ENCODE measurements at regions of chr1 and their contacts with region 1.

Region 1: DNA sequence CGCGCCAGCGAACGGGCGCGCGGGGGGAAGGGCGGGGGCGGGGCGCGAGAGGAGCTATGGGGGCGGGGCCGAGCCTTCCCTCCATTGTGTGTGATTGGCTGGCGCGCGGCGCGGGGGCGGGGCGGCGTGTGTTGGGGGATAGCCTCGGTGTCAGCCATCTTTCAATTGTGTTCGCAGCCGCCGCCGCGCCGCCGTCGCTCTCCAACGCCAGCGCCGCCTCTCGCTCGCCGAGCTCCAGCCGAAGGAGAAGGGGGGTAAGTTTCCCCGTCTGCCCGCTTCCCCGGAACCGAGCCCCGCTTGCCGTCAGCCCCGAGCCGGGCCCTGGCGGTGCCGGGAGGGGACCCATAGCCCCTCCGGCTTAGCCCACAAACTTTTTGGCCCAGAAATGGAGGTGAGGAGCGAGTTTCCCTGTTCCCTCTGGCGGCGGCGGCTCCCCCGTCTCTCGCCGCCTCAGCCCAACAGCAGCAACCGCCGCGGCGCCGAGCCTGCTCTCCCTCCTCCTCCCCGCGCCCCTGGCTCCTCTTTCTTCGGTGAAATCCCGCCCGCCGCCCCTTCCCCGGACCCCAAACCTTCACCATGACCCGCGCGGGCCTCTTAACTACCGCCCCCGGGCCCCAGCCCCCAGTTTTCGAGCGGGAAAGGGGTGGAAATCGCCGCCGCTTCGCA is at the start of gene H3-3A:
- DNase-seq: peak; percentile 97
- H3K4me3 Mint-ChIP-seq: peak within 1 kb of the TSS; percentile 100
- H3K27ac Mint-ChIP-seq: peak within 1 kb of the TSS; percentile 99
- H3K4me1 Mint-ChIP-seq: peaks cover 35% of the 10 kb centered on the region
- H3K27me3 Mint-ChIP-seq: no peaks in the 10 kb centered on the region
- total RNA-seq, gene H3-3A: 437 and 443 TPM in 2 replicates

Region 2: DNA sequence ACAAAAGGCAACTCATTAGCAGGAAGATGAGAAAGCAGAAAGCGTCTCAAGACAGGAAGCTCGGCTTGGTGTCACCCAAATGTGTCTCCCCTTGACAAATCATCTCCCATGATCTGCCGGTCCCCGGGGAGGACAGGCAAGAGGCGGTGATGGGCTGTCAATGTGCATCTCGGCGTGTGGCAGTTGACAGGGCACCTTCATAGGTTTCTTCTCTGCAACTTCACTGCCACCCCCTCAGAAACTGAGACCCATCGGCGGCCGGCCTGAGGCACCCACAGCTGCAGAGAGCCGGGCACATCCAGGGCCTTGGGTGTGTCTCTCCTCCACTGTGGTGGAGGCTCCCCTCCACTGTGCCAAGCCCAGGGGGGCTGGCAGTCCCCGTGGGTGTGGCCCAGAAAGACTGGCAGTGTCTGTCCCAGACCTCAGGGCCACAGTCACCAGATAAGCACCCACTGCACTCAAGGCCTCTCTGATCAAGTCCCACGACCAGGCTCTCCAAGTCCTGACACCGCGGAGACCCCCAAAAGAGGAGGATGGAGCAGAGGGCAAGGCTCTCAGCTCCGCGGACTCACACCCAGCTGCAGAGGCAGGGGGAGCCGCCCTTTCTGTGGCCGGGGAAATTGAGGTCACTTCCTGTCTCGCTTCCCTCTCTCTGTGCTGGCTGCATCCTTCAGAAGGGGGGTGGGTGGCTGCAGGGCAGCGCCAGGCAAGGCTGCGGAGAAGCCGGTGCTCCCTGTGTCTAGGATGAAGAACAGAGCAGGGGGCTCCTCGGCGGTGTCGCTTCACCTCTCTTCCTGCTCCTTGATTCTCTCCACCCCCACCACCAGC is 595.3 kb before region 1 on chr1:
- intact Hi-C with region 1: loop called (anchors 5 kb)
- DNase-seq: peak; percentile 83
- H3K4me3 Mint-ChIP-seq: peak overlapping the region; percentile 89
- H3K27ac Mint-ChIP-seq: peak overlapping the region; percentile 99
- H3K4me1 Mint-ChIP-seq: peaks cover 41% of the 10 kb centered on the region
- H3K27me3 Mint-ChIP-seq: no peaks in the 10 kb centered on the region

Region 3: DNA sequence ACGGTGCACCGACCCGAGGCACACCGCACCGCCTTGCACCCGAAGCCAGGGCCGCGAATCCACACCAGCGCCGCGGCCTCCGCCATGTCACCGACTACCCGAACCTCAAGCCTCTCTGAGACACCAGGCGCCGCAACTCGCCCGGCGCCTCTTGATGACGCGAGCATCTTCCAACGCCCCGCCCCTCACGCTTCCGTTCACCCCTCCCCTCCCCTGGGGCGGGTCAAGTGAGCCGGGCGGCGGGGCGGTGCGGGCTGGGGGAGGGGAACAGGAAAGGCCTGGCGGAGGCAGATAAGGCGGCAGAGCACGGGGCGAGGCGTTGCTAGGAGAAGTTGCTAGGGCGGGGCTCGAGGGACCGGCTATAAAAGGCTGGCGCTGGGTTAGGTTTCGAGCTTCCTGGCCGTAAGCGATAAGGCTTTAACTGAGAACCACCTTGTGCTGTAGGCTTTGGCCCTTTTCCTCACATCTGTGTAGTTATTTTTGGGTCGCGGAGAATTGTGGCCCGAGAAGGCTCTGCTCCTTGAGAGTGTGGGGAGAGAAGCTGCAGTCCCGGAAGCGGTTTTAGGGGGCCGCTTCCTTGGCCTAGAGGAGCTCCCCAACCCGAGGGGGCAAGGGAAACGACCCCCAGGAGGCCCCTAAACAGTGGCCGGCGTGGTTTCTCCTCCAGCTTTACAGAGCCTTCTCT is 63.3 kb before region 1 on chr1 and contains the start of gene SDE2:
- intact Hi-C with region 1: loop called (anchors 1 kb)
- DNase-seq: peak; percentile 100
- H3K4me3 Mint-ChIP-seq: peak within 1 kb of the TSS; percentile 100
- H3K27ac Mint-ChIP-seq: peak within 1 kb of the TSS; percentile 99
- H3K4me1 Mint-ChIP-seq: peaks cover 55% of the 10 kb centered on the region
- H3K27me3 Mint-ChIP-seq: no peaks in the 10 kb centered on the region
- total RNA-seq, gene SDE2: 22.0 and 22.3 TPM in 2 replicates

Region 4: DNA sequence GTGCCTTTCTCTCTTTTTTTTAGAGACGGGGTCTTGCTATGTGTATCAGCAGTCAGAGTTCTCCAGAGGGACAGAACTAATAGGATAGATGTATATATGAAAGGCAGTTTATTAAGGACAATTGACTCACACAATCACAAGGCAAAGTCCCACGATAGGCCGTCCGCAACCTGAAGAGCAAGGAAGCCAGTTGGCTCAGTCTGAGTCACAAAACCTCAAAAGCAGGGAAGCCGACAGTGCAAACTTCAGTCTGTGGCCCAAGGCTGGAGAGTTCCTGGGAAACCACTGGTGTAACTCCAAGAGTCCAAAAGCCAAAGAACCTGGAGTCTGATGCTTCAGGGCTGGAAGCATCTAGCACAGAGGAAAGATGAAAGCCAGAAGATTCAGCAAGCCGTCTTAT is 16.5 kb before region 1 on chr1:
- intact Hi-C with region 1: no loop called
- DNase-seq: no peak
- H3K4me3 Mint-ChIP-seq: no peak overlapping the region
- H3K27ac Mint-ChIP-seq: no peak overlapping the region
- H3K4me1 Mint-ChIP-seq: no peaks in the 10 kb centered on the region
- H3K27me3 Mint-ChIP-seq: peaks cover 5% of the 10 kb centered on the region

Region 5: GRCh38 chr1:226121587-226122400 is 59.1 kb after region 1 on chr1:
- intact Hi-C with region 1: loop called (anchors 1 kb)
- DNase-seq: peak; percentile 77
- H3K4me3 Mint-ChIP-seq: peak overlapping the region; percentile 81
- H3K27ac Mint-ChIP-seq: no peak overlapping the region
- H3K4me1 Mint-ChIP-seq: peaks cover 27% of the 10 kb centered on the region
- H3K27me3 Mint-ChIP-seq: peaks cover 13% of the 10 kb centered on the region

Region 6: GRCh38 chr1:226308723-226309315 is 246.1 kb after region 1 on chr1 and contains the start of gene LIN9:
- intact Hi-C with region 1: loop called (anchors 10 kb)
- DNase-seq: peak; percentile 89
- H3K4me3 Mint-ChIP-seq: peak within 1 kb of the TSS; percentile 89
- H3K27ac Mint-ChIP-seq: peak within 1 kb of the TSS; percentile 80
- H3K4me1 Mint-ChIP-seq: peaks cover 26% of the 10 kb centered on the region
- H3K27me3 Mint-ChIP-seq: peaks cover 18% of the 10 kb centered on the region
- total RNA-seq, gene LIN9: 9.7 and 12.7 TPM in 2 replicates

Region 7: GRCh38 chr1:226407497-226408284 is 345.0 kb after region 1 on chr1 and contains the start of gene PARP1:
- intact Hi-C with region 1: loop called (anchors 2 kb)
- DNase-seq: peak; percentile 90
- H3K4me3 Mint-ChIP-seq: peak within 1 kb of the TSS; percentile 93
- H3K27ac Mint-ChIP-seq: peak within 1 kb of the TSS; percentile 94
- H3K4me1 Mint-ChIP-seq: peaks cover 33% of the 10 kb centered on the region
- H3K27me3 Mint-ChIP-seq: no peaks in the 10 kb centered on the region
- total RNA-seq, gene PARP1: 194 and 197 TPM in 2 replicates

Measured in activated T-helper 2 cell treated with anti-CD3 and anti-CD28 coated beads, Interferon-gamma antibody, Interleukin-2, Interleukin-4, amounts not matched to agents 10 μg/mL and 5 μg/mL and 100 μg/mL, durations not matched to agents 14 hours and 24 hours and 36 hours (primary cell).